Ascending aorta (tissue), 2 donors: ENCODE measurements at regions of chr12 and their contacts with region 1.

Region 1: DNA sequence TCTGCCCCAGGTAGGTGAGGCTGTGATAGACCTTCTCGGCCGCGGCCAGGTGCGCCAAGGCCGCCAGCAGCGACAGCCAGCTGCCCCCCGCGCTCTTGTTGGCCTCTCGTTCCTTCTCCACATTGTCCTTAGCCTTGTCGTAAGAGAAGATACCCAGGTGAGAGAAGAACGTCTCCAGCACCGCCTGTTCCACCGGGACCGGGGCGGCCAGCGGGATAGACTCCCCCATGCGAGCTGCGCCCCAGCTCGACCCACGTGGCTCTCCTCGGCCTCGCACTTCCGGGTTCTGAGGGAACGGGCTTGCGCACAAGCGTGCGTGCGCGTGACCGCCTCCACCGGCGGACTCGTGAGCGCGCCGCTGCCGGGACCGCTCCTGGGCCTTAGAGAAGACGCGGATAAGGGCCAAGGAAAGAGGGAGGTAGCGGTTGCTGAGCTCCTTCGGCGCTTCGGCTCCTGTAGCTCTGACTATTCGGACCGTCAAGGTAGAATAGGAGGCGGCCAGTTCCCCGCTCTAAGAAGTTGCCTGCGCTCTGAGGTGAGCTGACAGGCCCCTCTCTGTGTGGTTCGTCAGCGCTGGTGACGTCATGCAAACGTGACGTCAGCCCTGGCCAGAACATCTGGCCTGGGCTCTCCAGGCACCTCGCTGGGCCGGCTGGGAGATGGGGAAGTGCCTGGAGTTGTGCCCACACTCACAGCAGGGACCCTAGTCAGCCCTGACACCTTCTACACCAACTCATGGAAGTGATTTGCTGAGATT is at the start of gene KICS2:
- DNase-seq: peak; percentile 78 to 96
- H3K4me3 ChIP-seq: peak within 1 kb of the TSS; percentile 74 to 79
- H3K27ac ChIP-seq: peak within 1 kb of the TSS; percentile 91 to 95
- H3K4me1 ChIP-seq: peaks cover 0 to 5% of the 10 kb centered on the region in 2 donors
- H3K27me3 ChIP-seq: no peaks in the 10 kb centered on the region
- CTCF ChIP-seq: no peak
- total RNA-seq, gene KICS2: 0.75 TPM

Region 2: GRCh38 chr12:63843721-63844390 is 378.3 kb before region 1 on chr12:
- intact Hi-C with region 1: loop called (anchors 1 kb)
- DNase-seq: peak; percentile 63 to 94
- H3K4me3 ChIP-seq: peak overlapping the region; percentile 80 to 96
- H3K27ac ChIP-seq: peak overlapping the region; percentile 96 to 98
- H3K4me1 ChIP-seq: peaks cover 0 to 4% of the 10 kb centered on the region in 2 donors
- H3K27me3 ChIP-seq: no peaks in the 10 kb centered on the region
- CTCF ChIP-seq: peak; percentile 84 to 95 (median 89)

Region 3: DNA sequence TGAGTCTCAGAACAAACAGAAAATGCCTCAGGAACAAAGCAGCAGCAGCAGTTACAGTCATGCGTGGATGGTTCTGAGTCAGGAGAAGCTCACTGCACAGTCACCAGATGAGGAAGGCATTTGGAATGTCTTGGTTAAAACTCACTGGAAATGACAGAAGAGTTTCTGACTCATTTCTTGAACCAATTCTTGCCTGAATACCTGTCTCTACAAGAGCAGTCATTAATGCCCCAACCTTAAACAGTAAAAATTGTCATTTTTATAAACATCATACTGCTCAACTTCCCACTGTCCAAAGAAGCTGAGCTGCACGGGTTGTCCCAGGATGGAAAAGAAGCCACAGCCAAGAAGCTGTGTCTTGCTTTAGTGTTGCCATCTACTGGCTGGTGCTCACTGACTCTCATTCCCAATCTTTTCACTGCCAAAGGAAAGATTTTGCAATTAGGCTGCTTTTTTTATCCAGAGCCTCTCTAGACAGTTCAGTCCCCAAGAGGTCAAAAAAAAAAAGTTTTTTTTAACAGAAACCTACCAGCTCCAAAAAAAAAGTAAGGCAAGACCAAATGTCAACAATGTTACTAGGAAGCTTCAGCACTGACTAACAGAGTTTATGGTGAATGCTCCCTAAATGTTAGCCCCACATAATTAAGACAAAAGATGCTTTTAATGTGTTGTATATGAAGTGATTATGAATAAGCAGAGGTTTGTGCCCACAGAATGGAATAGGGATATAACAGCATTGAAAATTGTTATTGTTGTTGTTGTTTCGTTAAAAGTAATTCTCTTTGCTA is 40.5 kb before region 1 on chr12:
- intact Hi-C with region 1: loop called (anchors 1 kb)
- DNase-seq: peak in 1 of 2 donors; percentile 83
- H3K4me3 ChIP-seq: peak overlapping the region in 1 of 2 donors; percentile 48
- H3K27ac ChIP-seq: peak overlapping the region; percentile 73 to 84
- H3K4me1 ChIP-seq: peaks cover 0 to 9% of the 10 kb centered on the region in 2 donors
- H3K27me3 ChIP-seq: no peaks in the 10 kb centered on the region
- CTCF ChIP-seq: peak; percentile 22 to 58 (median 35)

Region 4: DNA sequence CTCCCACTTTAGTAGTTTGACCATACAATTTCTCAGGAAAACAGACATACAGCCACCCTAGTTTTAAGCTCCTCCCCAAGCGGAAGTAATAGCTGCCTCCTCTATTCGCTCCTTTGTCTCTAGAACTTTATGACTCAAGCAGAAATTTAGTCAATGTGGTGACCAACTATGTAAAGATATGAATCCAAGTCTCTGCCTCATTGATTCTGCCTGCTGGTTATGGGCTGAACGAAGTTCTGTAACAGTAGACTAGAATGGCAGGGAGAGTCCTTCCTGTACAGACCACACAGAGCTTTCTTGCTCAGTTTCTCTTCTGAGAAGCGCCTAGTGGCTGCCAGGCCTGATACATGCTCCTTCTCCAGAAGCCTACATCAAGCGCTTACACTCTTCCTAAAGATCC is 19.2 kb before region 1 on chr12:
- intact Hi-C with region 1: no loop called
- DNase-seq: no peak
- H3K4me3 ChIP-seq: no peak overlapping the region
- H3K27ac ChIP-seq: no peak overlapping the region
- H3K4me1 ChIP-seq: no peaks in the 10 kb centered on the region
- H3K27me3 ChIP-seq: no peaks in the 10 kb centered on the region
- CTCF ChIP-seq: no peak

Region 5: GRCh38 chr12:64679487-64679983 is 457.3 kb after region 1 on chr12:
- intact Hi-C with region 1: loop called (anchors 10 kb)
- DNase-seq: peak; percentile 81 to 94
- H3K4me3 ChIP-seq: peak overlapping the region in 1 of 2 donors; percentile 44
- H3K27ac ChIP-seq: peak overlapping the region; percentile 93
- H3K4me1 ChIP-seq: peaks cover 25 to 72% of the 10 kb centered on the region in 2 donors
- H3K27me3 ChIP-seq: no peaks in the 10 kb centered on the region
- CTCF ChIP-seq: no peak